Cardiac septum (tissue), 1 donor: ENCODE measurements at regions of chr7 and their contacts with region 1.

Region 1: GRCh38 chr7:140003913-140004382 is 58.8 kb downstream of the PARP12 start:
- DNase-seq: no peak

Region 2: DNA sequence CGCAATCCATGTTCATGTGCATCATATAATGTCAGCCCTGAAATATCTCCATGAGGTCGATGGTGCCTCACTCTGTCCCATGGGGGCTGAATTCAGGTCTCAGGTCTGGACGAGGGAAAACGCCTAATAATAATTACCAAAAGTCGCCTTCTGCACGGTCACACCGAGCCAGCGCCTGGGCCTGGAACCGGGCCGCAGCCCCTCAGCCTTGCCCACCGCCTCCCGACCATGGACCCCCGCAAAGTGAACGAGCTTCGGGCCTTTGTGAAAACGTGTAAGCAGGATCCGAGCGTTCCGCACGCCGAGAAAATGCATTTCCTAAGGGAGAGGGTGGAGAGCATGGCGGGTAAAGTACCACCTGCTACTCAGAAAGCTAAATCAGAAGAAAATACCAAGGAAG is 501.7 kb before region 1 on chr7:
- intact Hi-C with region 1: loop called (anchors 5 kb)
- DNase-seq: no peak

Region 3: GRCh38 chr7:139602143-139602722 is 401.7 kb before region 1 on chr7:
- intact Hi-C with region 1: loop called (anchors 5 kb)
- DNase-seq: no peak

Region 4: GRCh38 chr7:139618482-139619366 is 385.2 kb before region 1 on chr7:
- intact Hi-C with region 1: loop called (anchors 5 kb)
- DNase-seq: no peak

Region 5: DNA sequence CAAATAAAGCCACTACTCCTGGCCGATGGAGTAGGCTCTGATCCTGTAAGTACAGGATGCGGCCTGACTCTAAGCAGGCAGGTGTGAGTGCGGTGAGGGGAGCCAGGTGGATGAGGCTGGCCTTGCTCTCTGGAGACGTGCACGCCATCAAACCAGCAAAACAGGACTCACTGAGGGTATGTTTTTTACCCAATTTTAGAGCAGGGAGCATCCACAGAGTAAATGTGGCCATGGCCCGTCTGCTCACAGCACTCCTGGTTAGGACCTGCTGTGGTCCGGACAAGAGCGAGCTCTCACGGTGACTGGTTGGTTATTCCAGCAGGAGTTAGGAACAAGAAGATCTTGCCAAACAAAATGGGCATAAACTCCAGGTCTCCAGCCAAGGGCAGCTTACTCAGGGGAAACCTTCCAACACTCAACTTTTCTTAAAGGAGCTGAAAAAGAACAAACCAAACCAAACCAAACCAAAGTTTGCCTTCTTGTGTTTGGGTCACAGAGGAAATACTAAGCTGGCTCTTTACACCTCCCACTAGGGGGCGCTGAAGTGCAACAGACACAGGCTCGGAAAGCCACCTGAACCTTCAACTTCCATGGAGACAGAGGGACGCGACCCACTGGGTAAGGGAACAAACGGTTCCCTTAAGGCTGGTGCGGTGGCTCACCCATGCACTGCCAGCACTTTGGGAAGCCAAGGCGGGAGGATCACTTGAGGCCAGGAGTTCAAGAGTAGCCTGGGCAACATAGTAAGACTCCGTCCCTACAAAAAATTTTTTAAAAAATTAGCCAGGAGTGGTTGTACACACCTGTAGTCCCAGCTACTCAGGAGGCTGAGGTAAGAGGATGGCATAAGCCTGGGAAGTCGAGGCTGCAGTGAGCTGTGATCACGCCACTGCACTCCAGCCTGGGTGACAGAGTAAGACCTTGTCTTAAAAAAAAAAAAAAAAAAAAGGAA is 358.1 kb before region 1 on chr7:
- intact Hi-C with region 1: loop called (anchors 2 kb)
- DNase-seq: peak; percentile 89

Region 6: DNA sequence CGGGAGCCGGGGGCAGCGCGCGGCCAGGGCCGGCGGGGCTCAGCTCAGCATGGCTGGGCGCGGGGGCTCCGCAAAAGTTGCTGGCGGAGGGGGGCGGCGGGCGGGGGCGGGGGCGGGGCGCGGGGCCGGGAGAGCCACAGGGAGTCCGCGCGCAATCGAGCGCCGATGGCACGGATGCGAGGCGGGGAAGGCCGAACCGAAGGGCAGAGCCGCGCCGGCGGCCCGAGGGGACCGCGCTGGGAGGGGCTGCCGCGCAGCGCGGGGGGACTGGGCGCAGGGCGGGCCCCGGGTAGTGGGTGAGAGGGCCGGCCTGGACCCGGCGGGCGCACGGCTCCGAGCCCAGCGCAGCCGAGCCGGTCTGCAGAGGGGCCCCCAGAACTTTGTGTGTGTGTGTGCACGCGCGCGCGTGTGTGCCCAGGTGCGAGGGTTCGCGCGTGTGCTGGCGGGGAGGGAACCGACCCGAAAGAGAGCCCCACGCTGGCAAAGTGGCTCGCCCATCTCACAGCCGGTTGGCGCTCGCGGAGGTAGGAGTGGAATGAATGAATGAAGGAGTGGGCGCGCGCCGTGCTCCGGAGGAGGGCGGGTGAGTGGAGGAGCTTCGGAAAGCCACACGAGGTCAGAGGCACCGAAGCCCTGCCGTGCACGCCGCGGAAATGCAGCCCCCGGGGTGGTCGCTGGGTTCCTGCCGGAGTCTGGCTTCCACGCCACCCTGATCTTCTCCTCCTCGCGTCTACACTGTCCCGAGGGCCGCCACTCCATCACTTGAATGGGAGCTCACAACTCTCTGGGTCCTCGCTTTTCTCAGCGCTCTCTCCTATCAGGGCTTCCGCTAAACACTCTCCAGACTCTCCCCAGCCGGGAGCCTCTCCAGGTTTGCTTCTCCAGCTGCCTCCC is 225.8 kb before region 1 on chr7 and contains the start of gene HIPK2:
- intact Hi-C with region 1: loop called (anchors 5 kb)
- DNase-seq: peak; percentile 88
- total RNA-seq, gene HIPK2: 218 TPM